HCT116 (cell line): ENCODE measurements at regions of chr5 and their contacts with region 1.

Region 1: DNA sequence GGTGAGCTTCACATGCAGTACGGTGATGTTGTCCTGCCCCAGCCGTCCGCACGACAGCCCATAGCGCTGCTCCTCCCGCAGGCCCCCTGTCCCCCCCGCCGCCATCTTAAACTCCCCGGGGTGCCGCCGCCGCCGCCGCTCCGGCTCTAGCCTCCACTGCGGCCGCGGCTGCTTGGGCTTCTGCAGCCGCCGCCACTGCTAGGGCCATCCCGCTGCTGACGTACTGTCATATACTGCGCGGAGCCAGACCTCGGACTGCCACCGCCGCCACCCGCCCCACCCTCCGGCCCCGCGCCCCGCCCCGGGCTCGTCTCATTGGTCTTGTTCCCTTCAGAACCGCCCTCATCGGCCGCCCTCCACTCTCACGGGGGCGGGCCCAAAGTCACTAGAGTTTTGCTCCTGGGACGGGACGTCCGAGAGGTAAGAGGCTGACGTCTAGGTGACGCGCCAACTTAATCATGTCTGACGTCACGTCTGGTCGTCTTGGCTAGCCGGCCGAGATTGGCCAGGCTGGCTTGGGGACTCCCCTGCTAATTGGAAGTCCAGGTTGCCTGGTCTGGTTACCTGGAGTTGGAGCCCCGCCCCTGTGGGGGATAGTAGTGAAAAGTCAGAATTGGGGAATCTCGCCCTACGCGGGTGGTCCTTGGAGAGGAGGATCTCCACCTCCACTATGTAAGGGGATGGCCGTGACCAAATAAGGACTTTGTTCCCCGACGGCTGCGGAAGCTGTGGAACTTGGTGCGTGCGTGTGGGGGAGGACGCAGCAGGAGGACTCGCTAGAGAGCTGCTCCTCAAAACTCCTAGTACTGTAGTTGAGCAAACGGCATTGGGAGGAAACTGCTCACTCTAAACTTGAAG is at the start of gene ELL2:
- DNase-seq: peak; percentile 100
- ATAC-seq: peak; percentile 84
- H3K4me3 ChIP-seq: peak within 1 kb of the TSS; percentile 83 to 84
- H3K27ac ChIP-seq: peak within 1 kb of the TSS; percentile 84
- H3K4me1 ChIP-seq: peaks cover 21 to 48% of the 10 kb centered on the region in 2 experiments
- H3K27me3 ChIP-seq: no peaks in the 10 kb centered on the region
- CTCF ChIP-seq: no peak
- POLR2A ChIP-seq: peak; percentile 24
- RAD21 ChIP-seq: no peak
- total RNA-seq, gene ELL2: 29.8 TPM

Region 2: DNA sequence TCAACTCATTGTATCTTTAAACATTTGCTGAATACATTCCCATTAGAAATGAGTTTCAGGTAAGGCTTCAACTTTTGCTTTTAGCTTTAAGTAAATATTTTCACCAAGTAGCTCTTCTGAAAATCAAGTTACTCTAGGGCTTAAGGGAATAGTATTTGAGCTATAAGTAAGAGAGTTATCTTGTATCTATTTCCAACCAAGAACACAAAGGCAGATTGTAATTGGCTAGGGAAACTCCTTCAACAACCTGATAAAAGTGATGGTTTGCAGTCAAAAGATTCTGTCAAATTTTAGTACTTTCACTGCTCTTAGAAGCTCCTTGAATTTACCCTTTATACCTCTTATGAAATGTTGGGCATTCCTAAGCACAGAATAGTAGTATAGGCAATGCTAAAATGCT is 13.2 kb before region 1 on chr5:
- CTCF ChIA-PET with region 1: no interaction called
- POLR2A ChIA-PET with region 1: interaction called, 3 read pairs
- RAD21 ChIA-PET with region 1: no interaction called
- intact Hi-C with region 1: loop called (anchors 1 kb)
- DNase-seq: no peak
- ATAC-seq: no peak
- H3K4me3 ChIP-seq: no peak overlapping the region
- H3K27ac ChIP-seq: no peak overlapping the region
- H3K4me1 ChIP-seq: no peaks in the 10 kb centered on the region
- H3K27me3 ChIP-seq: no peaks in the 10 kb centered on the region
- CTCF ChIP-seq: no peak
- POLR2A ChIP-seq: no peak
- RAD21 ChIP-seq: no peak

Region 3: DNA sequence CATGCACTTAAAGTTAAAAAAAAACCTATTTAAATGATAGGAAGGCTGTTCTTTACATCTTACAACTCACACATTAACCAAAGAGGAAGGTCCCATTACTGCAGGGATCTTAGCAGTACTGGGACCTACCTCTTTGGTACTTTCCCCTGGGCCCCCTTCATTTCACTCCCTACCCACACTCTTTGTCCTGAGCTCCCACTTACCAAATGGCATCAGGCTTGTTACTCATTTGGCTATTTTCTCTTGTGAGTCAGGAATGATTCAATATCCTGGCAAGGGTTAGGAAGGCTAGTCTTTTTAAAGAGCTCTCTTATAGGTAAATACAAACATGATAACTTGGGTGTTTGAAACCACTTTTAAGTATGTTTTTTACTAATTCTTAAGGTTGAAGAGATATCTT is 117.2 kb after region 1 on chr5:
- CTCF ChIA-PET with region 1: no interaction called
- POLR2A ChIA-PET with region 1: interaction called, 8 read pairs
- RAD21 ChIA-PET with region 1: no interaction called
- intact Hi-C with region 1: loop called (anchors 5 kb)
- DNase-seq: peak; percentile 83
- ATAC-seq: peak; percentile 74
- H3K4me3 ChIP-seq: peak overlapping the region in 1 of 2 experiments; percentile 27; a peak in 2 of 4 replicates
- H3K27ac ChIP-seq: no peak overlapping the region
- H3K4me1 ChIP-seq: peaks cover 0 to 39% of the 10 kb centered on the region in 2 experiments; a peak in 2 of 4 replicates
- H3K27me3 ChIP-seq: no peaks in the 10 kb centered on the region
- CTCF ChIP-seq: no peak
- POLR2A ChIP-seq: no peak
- RAD21 ChIP-seq: no peak

Region 4: DNA sequence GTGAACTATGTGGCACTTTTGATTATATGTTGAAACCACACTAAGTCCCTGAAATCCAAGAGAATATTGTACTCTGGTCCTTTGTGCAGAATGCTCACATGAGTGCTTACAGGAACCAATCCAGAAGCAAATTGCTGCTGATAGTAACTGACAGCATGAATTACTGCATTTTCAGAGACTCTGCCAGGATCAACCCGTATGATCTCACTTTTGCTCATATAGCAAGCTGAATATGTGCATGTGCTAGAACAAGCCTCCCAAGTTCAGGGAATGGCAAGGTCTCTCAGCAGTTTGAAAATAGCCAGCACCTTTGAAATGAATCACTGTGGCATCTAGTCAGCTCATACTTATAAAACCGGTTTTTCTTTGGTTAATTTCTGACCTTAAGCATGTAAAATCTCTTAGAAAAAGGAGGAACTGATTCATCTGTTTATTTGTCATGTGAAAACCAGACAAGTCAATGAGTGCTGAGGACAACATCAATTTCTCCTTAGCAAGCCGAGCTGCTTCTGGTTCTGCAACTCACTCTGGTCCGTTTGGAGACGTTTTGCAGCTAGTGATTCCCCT is 215.5 kb after region 1 on chr5:
- CTCF ChIA-PET with region 1: no interaction called
- POLR2A ChIA-PET with region 1: no interaction called
- RAD21 ChIA-PET with region 1: no interaction called
- intact Hi-C with region 1: loop called (anchors 5 kb)
- DNase-seq: peak; percentile 12
- ATAC-seq: no peak; the same call in 1 of the 2 replicates
- H3K4me3 ChIP-seq: no peak overlapping the region
- H3K27ac ChIP-seq: no peak overlapping the region
- H3K4me1 ChIP-seq: peaks cover 0 to 19% of the 10 kb centered on the region in 2 experiments; a peak in 3 of 4 replicates
- H3K27me3 ChIP-seq: no peaks in the 10 kb centered on the region
- CTCF ChIP-seq: no peak
- POLR2A ChIP-seq: no peak
- RAD21 ChIP-seq: 0 out of 2 replicates have a peak, but pooled peaks have one; percentile 9